CD4-positive, alpha-beta memory T cell (primary cell): ENCODE measurements at regions of chr4 and their contacts with region 1.

Region 1: GRCh38 chr4:80462621-80463091 is 127.1 kb downstream of the CFAP299 start:
- DNase-seq: peak in 4 of 5 donors; percentile 6 to 27 (median 18)
- H3K4me3 ChIP-seq: peak overlapping the region in 1 of 2 donors; percentile 10
- H3K4me3 Mint-ChIP-seq: peak overlapping the region; percentile 76 to 86 (median 81)
- H3K27ac ChIP-seq: no peak overlapping the region
- H3K27ac Mint-ChIP-seq: peak overlapping the region in 6 of 7 donors; percentile 12 to 87 (median 82)
- H3K4me1 ChIP-seq: peaks cover 18% of the 10 kb centered on the region
- H3K4me1 Mint-ChIP-seq: peaks cover 19 to 40% (median 26%) of the 10 kb centered on the region in 4 donors
- H3K27me3 ChIP-seq: no peaks in the 10 kb centered on the region
- H3K27me3 Mint-ChIP-seq: peaks cover 0 to 1% of the 10 kb centered on the region in 2 donors

Region 2: GRCh38 chr4:80434238-80434637 is 28.4 kb before region 1 on chr4:
- CTCF ChIA-PET with region 1: interaction called, 22 read pairs
- POLR2A ChIA-PET with region 1: interaction called, 5 read pairs
- intact Hi-C with region 1: no loop called
- DNase-seq: no peak
- H3K4me3 ChIP-seq: no peak overlapping the region
- H3K4me3 Mint-ChIP-seq: no peak overlapping the region
- H3K27ac ChIP-seq: no peak overlapping the region
- H3K27ac Mint-ChIP-seq: no peak overlapping the region
- H3K4me1 ChIP-seq: peaks cover 13% of the 10 kb centered on the region
- H3K4me1 Mint-ChIP-seq: peaks cover 7 to 23% (median 13%) of the 10 kb centered on the region in 4 donors
- H3K27me3 ChIP-seq: no peaks in the 10 kb centered on the region
- H3K27me3 Mint-ChIP-seq: no peaks in the 10 kb centered on the region

Region 3: GRCh38 chr4:80446664-80447063 is 16.0 kb before region 1 on chr4:
- CTCF ChIA-PET with region 1: interaction called, 10 read pairs
- POLR2A ChIA-PET with region 1: interaction called, 3 read pairs
- intact Hi-C with region 1: no loop called
- DNase-seq: no peak
- H3K4me3 ChIP-seq: no peak overlapping the region
- H3K4me3 Mint-ChIP-seq: no peak overlapping the region
- H3K27ac ChIP-seq: no peak overlapping the region
- H3K27ac Mint-ChIP-seq: peak overlapping the region in 3 of 7 donors; percentile 5 to 71 (median 52)
- H3K4me1 ChIP-seq: no peaks in the 10 kb centered on the region
- H3K4me1 Mint-ChIP-seq: peaks cover 0 to 2% (median 0%) of the 10 kb centered on the region in 4 donors
- H3K27me3 ChIP-seq: no peaks in the 10 kb centered on the region
- H3K27me3 Mint-ChIP-seq: no peaks in the 10 kb centered on the region

Region 4: GRCh38 chr4:80492761-80493160 is 30.1 kb after region 1 on chr4:
- CTCF ChIA-PET with region 1: interaction called, 12 read pairs
- POLR2A ChIA-PET with region 1: interaction called, 5 read pairs
- intact Hi-C with region 1: loop called (anchors 2 kb)
- DNase-seq: peak; percentile 76 to 83 (median 81)
- H3K4me3 ChIP-seq: no peak overlapping the region
- H3K4me3 Mint-ChIP-seq: peak overlapping the region in 7 of 8 donors; percentile 33 to 79 (median 69)
- H3K27ac ChIP-seq: peak overlapping the region; percentile 24
- H3K27ac Mint-ChIP-seq: peak overlapping the region; percentile 82 to 95 (median 92)
- H3K4me1 ChIP-seq: peaks cover 58% of the 10 kb centered on the region
- H3K4me1 Mint-ChIP-seq: peaks cover 45 to 66% (median 56%) of the 10 kb centered on the region in 4 donors
- H3K27me3 ChIP-seq: no peaks in the 10 kb centered on the region
- H3K27me3 Mint-ChIP-seq: no peaks in the 10 kb centered on the region

Region 5: DNA sequence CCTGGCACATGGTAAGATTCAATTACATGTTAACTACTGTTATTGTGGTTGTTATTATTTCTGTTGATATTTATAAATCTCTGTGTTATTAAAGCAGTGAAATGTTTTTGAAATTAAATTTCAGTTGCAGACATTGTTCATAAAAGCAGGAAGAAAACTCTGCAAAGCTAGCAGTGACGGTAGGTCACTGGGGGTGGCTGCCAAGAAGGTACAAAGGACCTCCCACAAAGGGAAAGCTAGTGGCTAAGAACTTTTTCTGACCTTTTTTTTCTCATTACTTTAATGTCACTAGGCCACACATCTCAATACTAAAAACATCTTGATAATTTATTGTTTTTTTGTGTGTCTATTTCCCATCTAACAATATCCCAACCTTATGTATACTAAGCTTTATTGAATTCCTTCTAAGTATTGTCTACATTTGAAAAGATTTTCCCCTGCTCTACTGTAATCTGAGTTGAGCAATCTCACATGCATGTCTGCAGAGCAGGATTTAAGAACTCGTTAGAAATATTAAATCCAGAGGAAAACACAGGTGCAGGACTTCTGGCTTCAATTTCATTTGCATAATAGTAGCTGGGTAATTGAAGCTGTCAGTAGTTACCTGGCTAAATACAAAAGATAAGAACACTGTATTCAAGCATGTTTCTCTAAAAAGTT is 70.1 kb after region 1 on chr4:
- CTCF ChIA-PET with region 1: interaction called, 8 read pairs
- POLR2A ChIA-PET with region 1: no interaction called
- intact Hi-C with region 1: loop called (anchors 5 kb)
- DNase-seq: no peak
- H3K4me3 ChIP-seq: no peak overlapping the region
- H3K4me3 Mint-ChIP-seq: no peak overlapping the region
- H3K27ac ChIP-seq: no peak overlapping the region
- H3K27ac Mint-ChIP-seq: no peak overlapping the region
- H3K4me1 ChIP-seq: no peaks in the 10 kb centered on the region
- H3K4me1 Mint-ChIP-seq: peaks cover 0 to 4% (median 3%) of the 10 kb centered on the region in 4 donors
- H3K27me3 ChIP-seq: no peaks in the 10 kb centered on the region
- H3K27me3 Mint-ChIP-seq: no peaks in the 10 kb centered on the region

Region 6: DNA sequence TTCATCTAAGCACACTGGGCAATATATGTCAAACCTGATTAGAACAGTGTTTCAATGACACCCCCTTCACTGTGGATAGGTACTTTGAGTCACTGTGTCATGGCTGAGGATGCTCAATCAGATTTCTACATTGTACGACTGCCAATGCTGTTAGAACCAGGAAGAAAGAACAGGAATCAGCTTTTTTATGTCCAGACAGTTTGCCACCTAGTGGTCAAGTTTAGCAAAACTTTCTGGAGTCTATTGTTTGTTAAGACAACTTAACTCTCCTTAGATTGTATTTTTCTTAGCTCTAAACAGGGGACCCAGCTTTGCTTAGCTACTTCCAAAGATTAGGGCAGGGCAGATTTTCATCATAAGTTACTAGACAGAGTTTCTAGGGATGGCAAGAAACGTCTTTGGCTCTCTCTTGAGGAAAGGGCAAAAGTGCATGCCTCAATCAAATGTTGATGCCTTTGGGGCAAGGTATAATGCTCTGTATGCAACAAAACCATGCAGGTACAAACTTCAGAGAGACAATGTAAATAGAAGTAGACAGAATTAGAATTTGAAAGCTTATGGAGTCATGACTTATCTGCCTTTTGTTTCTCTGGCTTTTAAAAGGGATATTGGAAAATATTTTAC is 527.4 kb after region 1 on chr4:
- CTCF ChIA-PET with region 1: interaction called, 40 read pairs
- POLR2A ChIA-PET with region 1: no interaction called
- intact Hi-C with region 1: loop called (anchors 1 kb)
- DNase-seq: peak; percentile 36 to 56 (median 48)
- H3K4me3 ChIP-seq: no peak overlapping the region
- H3K4me3 Mint-ChIP-seq: no peak overlapping the region
- H3K27ac ChIP-seq: no peak overlapping the region
- H3K27ac Mint-ChIP-seq: no peak overlapping the region
- H3K4me1 ChIP-seq: no peaks in the 10 kb centered on the region
- H3K4me1 Mint-ChIP-seq: peaks cover 0 to 4% (median 0%) of the 10 kb centered on the region in 4 donors
- H3K27me3 ChIP-seq: no peaks in the 10 kb centered on the region
- H3K27me3 Mint-ChIP-seq: peaks cover 2 to 11% of the 10 kb centered on the region in 2 donors

Region 7: DNA sequence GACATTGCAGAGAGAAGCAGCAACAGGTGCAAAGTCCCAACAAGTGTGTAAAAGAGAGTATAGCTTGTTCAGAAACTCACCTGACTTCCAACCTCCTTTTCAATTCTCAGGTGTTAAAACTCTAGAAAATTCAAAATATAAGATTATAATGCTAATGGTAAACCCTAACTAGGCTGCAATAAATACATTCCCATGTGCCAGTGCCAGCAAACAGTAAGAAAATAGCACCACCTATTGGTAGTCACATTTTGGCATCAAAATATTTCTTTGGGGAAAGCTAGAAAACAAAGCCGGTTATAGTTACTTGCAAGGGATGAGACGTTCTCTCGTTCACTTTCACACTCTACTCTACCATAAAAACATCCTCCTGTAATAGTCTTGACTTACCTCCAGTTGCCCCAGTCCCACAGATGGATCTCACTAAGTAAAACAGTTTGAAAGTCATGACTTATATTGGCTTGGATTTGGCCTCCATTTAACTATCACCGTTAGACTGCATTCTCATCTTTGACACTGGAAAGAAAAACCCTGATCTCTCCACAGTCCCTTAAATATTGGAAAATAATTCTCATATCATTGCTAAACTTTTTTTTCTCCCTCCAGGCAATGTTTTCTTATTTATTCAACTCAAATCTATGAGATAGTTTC is 577.5 kb after region 1 on chr4:
- CTCF ChIA-PET with region 1: interaction called, 5 read pairs
- POLR2A ChIA-PET with region 1: no interaction called
- intact Hi-C with region 1: loop called (anchors 2 kb)
- DNase-seq: peak in 4 of 5 donors; percentile 37 to 46 (median 43)
- H3K4me3 ChIP-seq: no peak overlapping the region
- H3K4me3 Mint-ChIP-seq: no peak overlapping the region
- H3K27ac ChIP-seq: no peak overlapping the region
- H3K27ac Mint-ChIP-seq: no peak overlapping the region
- H3K4me1 ChIP-seq: no peaks in the 10 kb centered on the region
- H3K4me1 Mint-ChIP-seq: no peaks in the 10 kb centered on the region
- H3K27me3 ChIP-seq: no peaks in the 10 kb centered on the region
- H3K27me3 Mint-ChIP-seq: peaks cover 13 to 14% of the 10 kb centered on the region in 2 donors